ENCODE measurements at regions of chr19 and their contacts with region 1.

Region 1: GRCh38 chr19:18521885-18522624 is at the start of gene ELL:
- DNase-seq: peak; percentile 100
- H3K4me3 Mint-ChIP-seq: peak within 1 kb of the TSS; percentile 85
- H3K27ac Mint-ChIP-seq: peak within 1 kb of the TSS; percentile 89
- H3K4me1 Mint-ChIP-seq: peaks cover 17% of the 10 kb centered on the region
- H3K27me3 Mint-ChIP-seq: no peaks in the 10 kb centered on the region
- total RNA-seq, gene ELL: 14.1 TPM

Region 2: GRCh38 chr19:18192673-18193387 is 329.2 kb before region 1 on chr19 and contains the start of gene MPV17L2:
- CTCF ChIA-PET with region 1: no interaction called
- intact Hi-C with region 1: loop called (anchors 1 kb)
- DNase-seq: peak; percentile 100
- H3K4me3 Mint-ChIP-seq: peak within 1 kb of the TSS; percentile 83
- H3K27ac Mint-ChIP-seq: peak within 1 kb of the TSS; percentile 90
- H3K4me1 Mint-ChIP-seq: peaks cover 19% of the 10 kb centered on the region
- H3K27me3 Mint-ChIP-seq: no peaks in the 10 kb centered on the region
- total RNA-seq, gene MPV17L2: 6.3 to 6.5 TPM

Region 3: DNA sequence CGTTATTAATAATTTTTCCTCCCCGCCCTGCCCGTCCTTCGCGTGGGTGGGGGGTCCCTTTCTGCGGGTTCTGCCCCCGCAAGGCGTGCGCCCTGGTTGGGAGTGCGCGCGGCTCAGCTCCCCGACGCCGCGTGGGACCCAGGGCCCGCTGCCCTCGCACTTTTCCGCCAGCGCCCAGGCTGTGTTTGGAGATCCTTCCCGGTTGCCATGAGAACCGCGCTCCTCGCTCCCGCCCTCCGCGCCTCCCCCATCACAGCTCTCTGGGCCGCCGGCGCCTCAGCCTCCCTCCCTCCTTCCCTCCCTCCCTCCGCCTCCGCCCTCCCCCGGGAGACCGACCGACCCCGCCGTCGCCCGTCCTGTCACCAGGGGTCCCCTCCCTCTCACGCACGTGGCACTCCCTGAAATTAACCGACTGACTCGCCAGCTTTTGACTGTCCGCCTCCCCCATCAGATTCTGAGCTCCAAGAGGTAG is 105.2 kb before region 1 on chr19:
- CTCF ChIA-PET with region 1: no interaction called
- intact Hi-C with region 1: no loop called
- DNase-seq: peak; percentile 68
- H3K4me3 Mint-ChIP-seq: peak overlapping the region; percentile 70
- H3K27ac Mint-ChIP-seq: no peak overlapping the region
- H3K4me1 Mint-ChIP-seq: peaks cover 58% of the 10 kb centered on the region
- H3K27me3 Mint-ChIP-seq: peaks cover 40% of the 10 kb centered on the region

Region 4: GRCh38 chr19:18469069-18469846 is 52.8 kb before region 1 on chr19:
- CTCF ChIA-PET with region 1: interaction called, 15 read pairs
- intact Hi-C with region 1: loop called (anchors 2 kb)
- DNase-seq: peak; percentile 72
- H3K4me3 Mint-ChIP-seq: no peak overlapping the region
- H3K27ac Mint-ChIP-seq: no peak overlapping the region
- H3K4me1 Mint-ChIP-seq: peaks cover 2% of the 10 kb centered on the region
- H3K27me3 Mint-ChIP-seq: no peaks in the 10 kb centered on the region

Region 5: GRCh38 chr19:18542936-18543815 is 21.1 kb after region 1 on chr19 and contains the start of gene FKBP8:
- CTCF ChIA-PET with region 1: interaction called, 10 read pairs
- intact Hi-C with region 1: loop called (anchors 1 kb)
- DNase-seq: peak; percentile 97
- H3K4me3 Mint-ChIP-seq: peak within 1 kb of the TSS; percentile 88
- H3K27ac Mint-ChIP-seq: peak within 1 kb of the TSS; percentile 95
- H3K4me1 Mint-ChIP-seq: peaks cover 21% of the 10 kb centered on the region
- H3K27me3 Mint-ChIP-seq: no peaks in the 10 kb centered on the region
- total RNA-seq, gene FKBP8: 161 to 163 TPM

Region 6: GRCh38 chr19:18594096-18594823 is 72.2 kb after region 1 on chr19:
- CTCF ChIA-PET with region 1: interaction called, 22 read pairs
- intact Hi-C with region 1: loop called (anchors 1 kb)
- DNase-seq: peak; percentile 75
- H3K4me3 Mint-ChIP-seq: peak overlapping the region; percentile 61
- H3K27ac Mint-ChIP-seq: no peak overlapping the region
- H3K4me1 Mint-ChIP-seq: peaks cover 21% of the 10 kb centered on the region
- H3K27me3 Mint-ChIP-seq: peaks cover 2% of the 10 kb centered on the region

Region 7: GRCh38 chr19:19063183-19064097 is 541.4 kb after region 1 on chr19 and contains the start of gene SLC25A42:
- CTCF ChIA-PET with region 1: no interaction called
- intact Hi-C with region 1: loop called (anchors 1 kb)
- DNase-seq: peak; percentile 99
- H3K4me3 Mint-ChIP-seq: peak within 1 kb of the TSS; percentile 85
- H3K27ac Mint-ChIP-seq: peak within 1 kb of the TSS; percentile 83
- H3K4me1 Mint-ChIP-seq: peaks cover 41% of the 10 kb centered on the region
- H3K27me3 Mint-ChIP-seq: no peaks in the 10 kb centered on the region
- total RNA-seq, gene SLC25A42: 6.7 to 8.5 TPM

Measured in activated naive CD4-positive, alpha-beta T cell treated with anti-CD3 and anti-CD28 coated beads for 36 hours (primary cell).